Activated B cell treated with CpG ODN at 0.5 μM for 24 hours (primary cell): ENCODE measurements at regions of chr10 and their contacts with region 1.

Region 1: DNA sequence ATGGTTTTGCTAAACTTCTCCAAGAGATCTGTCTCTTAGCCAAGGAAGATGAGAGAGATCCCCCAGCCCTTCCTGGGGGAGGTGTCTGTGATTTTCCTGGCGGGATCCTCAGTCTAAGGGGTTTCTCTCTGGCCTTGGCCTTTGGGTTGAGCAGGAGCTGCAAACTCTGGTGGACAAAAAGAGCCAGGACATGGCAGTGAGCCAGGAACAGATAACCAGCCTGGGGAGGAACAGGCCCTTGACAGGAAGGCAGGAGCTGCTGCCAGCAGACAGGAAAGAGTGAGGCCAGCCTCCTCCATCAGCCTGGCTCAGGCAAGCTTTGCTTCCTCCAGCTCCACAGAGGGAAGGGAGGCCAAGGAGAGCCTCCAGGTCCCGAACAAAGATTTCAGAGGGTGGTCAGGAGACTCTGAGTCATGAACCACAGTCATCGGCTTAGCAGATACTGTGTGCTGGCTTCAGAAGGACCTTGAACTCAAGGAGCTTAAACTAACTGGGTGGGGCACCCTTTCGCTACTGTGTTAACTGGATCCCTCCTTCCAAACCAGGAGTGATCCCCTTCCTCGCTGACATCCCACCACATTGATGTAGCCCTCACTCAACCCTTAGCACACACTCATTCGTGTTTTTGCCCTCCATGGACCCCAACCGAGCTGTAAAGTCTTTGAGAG is 34.7 kb downstream of the DDIT4 start:
- DNase-seq: no peak
- ATAC-seq: peak; percentile 27
- H3K4me3 Mint-ChIP-seq: no peak overlapping the region
- H3K27ac Mint-ChIP-seq: peak overlapping the region; percentile 50
- H3K4me1 Mint-ChIP-seq: peaks cover 60% of the 10 kb centered on the region
- H3K27me3 Mint-ChIP-seq: no peaks in the 10 kb centered on the region
- CTCF ChIP-seq: no peak

Region 2: DNA sequence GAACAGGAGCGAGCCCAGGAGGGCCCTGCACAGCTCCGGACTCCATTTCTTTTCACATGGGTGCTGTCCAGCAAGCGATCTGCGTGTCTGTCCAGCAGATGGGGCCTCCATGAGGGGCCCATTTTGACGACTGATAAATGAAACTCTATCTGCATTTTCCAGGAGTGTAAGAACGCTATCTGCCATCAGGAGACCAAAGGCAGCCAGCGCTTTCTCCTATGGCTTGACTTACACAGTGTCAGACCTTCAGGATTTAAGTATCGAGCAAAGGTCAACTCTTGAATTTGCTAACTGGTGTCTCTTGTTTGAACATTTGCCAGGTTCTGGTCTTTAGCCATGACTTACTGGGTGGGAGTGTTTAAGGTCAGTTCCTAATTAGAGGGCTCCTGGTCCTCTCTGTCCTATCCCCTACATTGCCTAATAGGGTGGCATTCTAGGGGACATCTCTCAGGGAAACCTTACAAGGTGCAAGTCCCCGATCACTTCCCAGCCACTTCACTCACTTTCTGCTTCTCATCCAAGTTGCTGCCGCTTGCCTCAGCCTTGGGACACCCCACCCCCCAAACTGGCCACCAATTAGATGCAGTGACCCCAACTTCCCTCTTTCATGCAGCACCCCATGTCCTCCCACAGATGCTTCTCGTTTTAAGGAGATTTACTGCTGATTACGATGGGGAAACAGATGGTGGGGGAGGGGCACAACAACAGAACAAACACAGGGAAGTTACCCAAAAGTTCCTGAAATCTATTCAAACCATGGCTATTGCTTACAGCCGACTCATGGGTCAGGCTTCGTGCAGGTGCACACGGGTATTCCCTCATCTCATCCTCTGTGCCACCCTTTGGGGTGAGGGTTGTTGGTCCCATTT is 555.1 kb before region 1 on chr10:
- CTCF ChIA-PET with region 1: no interaction called
- POLR2A ChIA-PET with region 1: no interaction called
- intact Hi-C with region 1: no loop called
- DNase-seq: no peak
- ATAC-seq: no peak
- H3K4me3 Mint-ChIP-seq: peak overlapping the region; percentile 69
- H3K27ac Mint-ChIP-seq: peak overlapping the region; percentile 83
- H3K4me1 Mint-ChIP-seq: peaks cover 81% of the 10 kb centered on the region
- H3K27me3 Mint-ChIP-seq: no peaks in the 10 kb centered on the region
- CTCF ChIP-seq: no peak

Region 3: GRCh38 chr10:72260588-72261322 is 47.7 kb before region 1 on chr10:
- CTCF ChIA-PET with region 1: no interaction called
- POLR2A ChIA-PET with region 1: interaction called, 10 read pairs
- intact Hi-C with region 1: no loop called
- DNase-seq: peak; percentile 70
- ATAC-seq: peak; percentile 71
- H3K4me3 Mint-ChIP-seq: peak overlapping the region; percentile 91
- H3K27ac Mint-ChIP-seq: peak overlapping the region; percentile 96
- H3K4me1 Mint-ChIP-seq: peaks cover 58% of the 10 kb centered on the region
- H3K27me3 Mint-ChIP-seq: no peaks in the 10 kb centered on the region
- CTCF ChIP-seq: no peak